K562 (cell line): ENCODE measurements at regions of chr7 and their contacts with region 1.

Region 1: DNA sequence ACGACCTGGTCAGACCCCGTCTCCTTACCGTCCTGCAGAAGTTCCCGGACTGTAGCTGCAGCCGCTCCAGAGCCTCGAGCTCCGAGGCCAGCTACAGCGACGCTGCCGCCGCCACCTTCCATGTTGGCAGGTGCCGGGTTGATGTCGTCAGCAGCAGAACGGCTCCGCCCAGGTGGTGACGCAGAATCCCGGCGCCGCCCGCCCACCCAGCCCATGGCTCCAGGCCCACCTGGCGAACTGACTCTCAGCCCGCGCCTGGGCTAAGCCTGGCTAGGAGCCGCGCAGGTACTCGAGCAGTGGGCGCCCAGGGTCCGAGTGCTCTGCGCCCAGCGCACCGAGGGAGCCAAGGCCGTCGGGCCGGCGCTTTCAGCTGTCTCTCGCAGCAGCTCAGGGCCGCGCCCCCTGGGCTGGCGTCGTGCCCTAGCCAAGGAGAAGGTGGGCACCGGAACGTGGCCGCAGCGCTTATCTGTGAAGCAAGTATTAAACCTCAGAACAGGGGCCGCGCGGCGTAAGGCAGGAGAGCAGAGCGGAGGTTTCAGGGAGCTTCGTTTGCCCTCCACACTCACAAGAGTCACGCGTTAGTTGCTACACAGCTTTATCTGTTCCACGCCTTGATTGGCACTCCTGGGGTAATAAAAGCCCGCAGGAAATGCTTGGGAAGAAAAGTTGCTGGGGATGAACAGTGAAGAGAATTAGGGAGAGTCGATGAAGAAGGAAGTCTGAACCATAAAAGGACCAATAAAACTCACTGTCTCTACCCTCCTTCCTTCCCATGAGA is at the starts of genes COG5 and DUS4L:
- DNase-seq: peak; percentile 90 to 95 (median 92)
- ATAC-seq: peak; percentile 91
- H3K4me3 ChIP-seq: peak within 1 kb of the TSS; percentile 74
- H3K27ac ChIP-seq: peak within 1 kb of the TSS; percentile 81
- H3K4me1 ChIP-seq: peaks cover 10 to 27% of the 10 kb centered on the region in 2 experiments; a peak in 4 of 5 replicates
- H3K27me3 ChIP-seq: no peaks in the 10 kb centered on the region
- CTCF ChIP-seq: 0 out of 6 replicates have a peak, but pooled peaks of 1 of the 3 experiments have one; percentile 3
- EP300 ChIP-seq: no peak
- POLR2A ChIP-seq: peak; percentile 94
- RAD21 ChIP-seq: no peak
- polyA plus RNA-seq, gene COG5: 15.3 to 25.9 TPM
- polyA plus RNA-seq, gene DUS4L: 12.2 to 14.5 TPM

Region 2: GRCh38 chr7:107462740-107463444 is 101.1 kb before region 1 on chr7:
- CTCF ChIA-PET with region 1: no interaction called
- POLR2A ChIA-PET with region 1: no interaction called
- in situ Hi-C with region 1: no loop called
- intact Hi-C with region 1: loop called (anchors 5 kb)
- DNase-seq: peak; percentile 20 to 77 (median 38)
- ATAC-seq: peak; percentile 92
- H3K4me3 ChIP-seq: no peak overlapping the region
- H3K27ac ChIP-seq: no peak overlapping the region
- H3K4me1 ChIP-seq: no peaks in the 10 kb centered on the region
- H3K27me3 ChIP-seq: no peaks in the 10 kb centered on the region
- CTCF ChIP-seq: peak; percentile 77 to 97 (median 82)
- EP300 ChIP-seq: 0 out of 2 replicates have a peak, but pooled peaks have one; percentile 24
- POLR2A ChIP-seq: no peak
- RAD21 ChIP-seq: peak; percentile 94 to 97

Region 3: GRCh38 chr7:107551936-107552335 is 12.0 kb before region 1 on chr7:
- CTCF ChIA-PET with region 1: no interaction called
- POLR2A ChIA-PET with region 1: interaction called, 13 read pairs
- in situ Hi-C with region 1: no loop called
- intact Hi-C with region 1: no loop called
- DNase-seq: no peak
- ATAC-seq: no peak
- H3K4me3 ChIP-seq: no peak overlapping the region
- H3K27ac ChIP-seq: no peak overlapping the region
- H3K4me1 ChIP-seq: no peaks in the 10 kb centered on the region
- H3K27me3 ChIP-seq: no peaks in the 10 kb centered on the region
- CTCF ChIP-seq: no peak
- EP300 ChIP-seq: no peak
- POLR2A ChIP-seq: no peak
- RAD21 ChIP-seq: no peak

Region 4: DNA sequence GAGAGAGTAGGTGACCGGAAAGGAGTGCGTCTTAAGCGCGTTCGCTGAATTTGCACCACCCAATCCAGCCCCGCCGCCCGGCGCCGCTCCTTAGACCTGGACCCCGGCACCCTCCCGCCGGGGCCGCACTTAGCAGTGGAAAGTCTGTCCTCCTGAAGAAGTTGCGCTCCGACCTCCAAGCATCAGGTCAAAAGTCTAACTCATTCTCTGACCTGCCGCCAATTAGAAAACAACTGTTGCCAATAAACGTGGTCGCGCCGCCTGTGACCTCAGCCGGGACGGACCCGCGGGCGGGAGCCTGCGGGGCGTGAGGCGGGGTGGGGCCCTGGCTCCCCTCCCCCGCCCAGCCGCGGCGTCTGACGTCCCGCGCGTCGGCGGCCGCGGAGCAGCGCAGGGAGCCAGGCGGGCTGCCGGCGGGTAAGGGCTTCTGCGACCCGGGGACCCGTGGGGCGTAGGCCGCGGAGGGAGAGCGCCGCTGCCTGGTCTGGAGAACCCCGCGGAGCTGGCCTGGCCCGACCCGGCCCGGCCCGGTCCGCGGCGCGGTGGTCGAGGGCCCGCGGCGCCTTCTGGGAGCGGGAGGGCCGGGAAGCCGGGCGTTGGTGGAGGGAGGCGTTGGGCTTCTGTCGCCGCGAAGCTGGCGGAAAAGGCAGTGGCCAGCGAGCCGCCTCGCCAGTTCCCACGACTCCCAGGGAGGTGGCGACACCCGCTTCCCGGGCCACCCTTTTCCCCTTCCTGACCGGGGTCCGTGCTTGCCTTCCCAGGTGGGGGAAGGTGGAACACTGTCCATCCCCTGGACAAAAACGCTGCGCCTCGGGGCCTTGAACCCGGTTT is 16.1 kb after region 1 on chr7 and contains the start of gene BCAP29:
- CTCF ChIA-PET with region 1: no interaction called
- POLR2A ChIA-PET with region 1: interaction called, 16 read pairs
- in situ Hi-C with region 1: no loop called
- intact Hi-C with region 1: no loop called
- DNase-seq: peak; percentile 94 to 95 (median 95)
- ATAC-seq: peak; percentile 94
- H3K4me3 ChIP-seq: peak within 1 kb of the TSS; percentile 62
- H3K27ac ChIP-seq: peak within 1 kb of the TSS; percentile 83
- H3K4me1 ChIP-seq: peaks cover 6 to 13% of the 10 kb centered on the region in 2 experiments; a peak in 4 of 5 replicates
- H3K27me3 ChIP-seq: no peaks in the 10 kb centered on the region
- CTCF ChIP-seq: peak; percentile 55 to 64 (median 60)
- EP300 ChIP-seq: peak; percentile 43
- POLR2A ChIP-seq: peak; percentile 92
- RAD21 ChIP-seq: peak; percentile 63 to 65
- polyA plus RNA-seq, gene BCAP29: 63.4 to 64.4 TPM

Region 5: GRCh38 chr7:107924841-107925504 is 361.0 kb after region 1 on chr7:
- CTCF ChIA-PET with region 1: no interaction called
- POLR2A ChIA-PET with region 1: no interaction called
- in situ Hi-C with region 1: no loop called
- intact Hi-C with region 1: no loop called
- DNase-seq: no peak
- ATAC-seq: no peak
- H3K4me3 ChIP-seq: no peak overlapping the region
- H3K27ac ChIP-seq: no peak overlapping the region
- H3K4me1 ChIP-seq: no peaks in the 10 kb centered on the region
- H3K27me3 ChIP-seq: no peaks in the 10 kb centered on the region
- CTCF ChIP-seq: no peak
- EP300 ChIP-seq: no peak
- POLR2A ChIP-seq: 0 out of 2 replicates have a peak, but pooled peaks have one; percentile 26
- RAD21 ChIP-seq: no peak